ENCODE measurements at regions of chr7 and their contacts with region 1.

Region 1: GRCh38 chr7:39894904-39895303 is 55.2 kb upstream of the CDK13 start:
- DNase-seq: no peak
- H3K4me3 ChIP-seq: no peak overlapping the region
- H3K4me3 Mint-ChIP-seq: no peak overlapping the region
- H3K27ac Mint-ChIP-seq: no peak overlapping the region
- H3K4me1 ChIP-seq: peaks cover 16% of the 10 kb centered on the region
- H3K4me1 Mint-ChIP-seq: peaks cover 16% of the 10 kb centered on the region
- H3K27me3 ChIP-seq: no peaks in the 10 kb centered on the region
- H3K27me3 Mint-ChIP-seq: peaks cover 3% of the 10 kb centered on the region
- CTCF ChIP-seq: no peak

Region 2: GRCh38 chr7:39407137-39407536 is 487.8 kb before region 1 on chr7:
- CTCF ChIA-PET with region 1: no interaction called
- POLR2A ChIA-PET with region 1: no interaction called
- intact Hi-C with region 1: no loop called
- DNase-seq: no peak
- H3K4me3 ChIP-seq: no peak overlapping the region
- H3K4me3 Mint-ChIP-seq: no peak overlapping the region
- H3K27ac Mint-ChIP-seq: no peak overlapping the region
- H3K4me1 ChIP-seq: no peaks in the 10 kb centered on the region
- H3K4me1 Mint-ChIP-seq: peaks cover 10% of the 10 kb centered on the region
- H3K27me3 ChIP-seq: no peaks in the 10 kb centered on the region
- H3K27me3 Mint-ChIP-seq: peaks cover 3% of the 10 kb centered on the region
- CTCF ChIP-seq: no peak

Region 3: DNA sequence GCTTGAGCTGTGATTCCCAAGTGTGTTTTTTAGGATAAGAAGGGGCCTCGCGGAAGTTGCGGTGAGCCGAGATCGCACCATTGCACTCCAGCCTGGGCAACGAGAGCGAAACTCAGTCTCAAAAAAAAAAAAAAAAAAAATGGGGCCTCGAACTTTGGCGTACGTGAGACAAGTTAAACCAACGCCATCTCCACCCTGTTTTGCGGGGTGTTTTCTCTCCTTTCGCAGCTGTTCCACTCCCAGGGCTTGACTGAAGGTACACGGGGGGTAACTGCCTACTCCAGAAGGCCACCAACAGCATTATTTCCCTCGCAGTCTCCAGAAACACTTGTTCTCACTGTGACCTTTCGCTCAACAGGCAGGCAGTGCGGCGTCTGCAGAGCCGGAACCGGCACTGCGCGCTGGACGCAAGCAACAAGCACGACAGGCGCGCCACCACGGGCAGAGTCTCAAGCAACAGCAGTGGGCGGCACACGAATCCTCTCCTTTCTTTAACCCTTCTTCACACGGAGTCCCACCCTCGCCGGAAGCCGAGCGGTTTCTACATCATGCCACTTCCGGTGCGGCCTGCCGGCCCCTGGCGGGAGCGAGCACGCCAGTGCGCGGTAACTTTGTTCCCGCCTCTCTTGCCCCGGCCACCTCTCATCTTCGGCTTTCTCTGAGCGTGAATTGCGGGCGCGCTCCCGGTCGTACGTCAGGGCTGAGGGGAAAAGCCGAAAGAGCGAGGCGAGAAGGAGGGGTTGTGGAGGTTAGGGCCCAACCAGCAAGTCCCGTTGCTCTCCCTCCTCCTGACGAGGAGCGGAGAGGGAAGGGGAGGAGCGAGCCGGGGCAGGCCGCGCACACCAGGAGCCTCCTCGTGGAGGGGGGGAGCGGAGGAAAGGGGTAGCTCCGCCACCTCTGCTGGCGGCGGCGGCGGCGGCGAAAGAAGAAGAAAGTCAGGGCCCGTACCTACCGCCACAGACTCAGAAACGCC is 54.3 kb after region 1 on chr7:
- CTCF ChIA-PET with region 1: interaction called, 6 read pairs
- POLR2A ChIA-PET with region 1: interaction called, 4 read pairs
- intact Hi-C with region 1: loop called (anchors 1 kb)
- DNase-seq: peak; percentile 98 to 99
- H3K4me3 ChIP-seq: peak overlapping the region; percentile 93
- H3K4me3 Mint-ChIP-seq: peak overlapping the region; percentile 96
- H3K27ac Mint-ChIP-seq: peak overlapping the region; percentile 99
- H3K4me1 ChIP-seq: peaks cover 9% of the 10 kb centered on the region; the same call in 1 of the 2 replicates
- H3K4me1 Mint-ChIP-seq: no peaks in the 10 kb centered on the region
- H3K27me3 ChIP-seq: no peaks in the 10 kb centered on the region
- H3K27me3 Mint-ChIP-seq: no peaks in the 10 kb centered on the region
- CTCF ChIP-seq: no peak

Region 4: GRCh38 chr7:40057292-40057691 is 162.4 kb after region 1 on chr7:
- CTCF ChIA-PET with region 1: interaction called, 38 read pairs
- POLR2A ChIA-PET with region 1: no interaction called
- intact Hi-C with region 1: loop called (anchors 1 kb)
- DNase-seq: no peak
- H3K4me3 ChIP-seq: no peak overlapping the region
- H3K4me3 Mint-ChIP-seq: no peak overlapping the region
- H3K27ac Mint-ChIP-seq: no peak overlapping the region
- H3K4me1 ChIP-seq: peaks cover 9% of the 10 kb centered on the region
- H3K4me1 Mint-ChIP-seq: peaks cover 11% of the 10 kb centered on the region
- H3K27me3 ChIP-seq: no peaks in the 10 kb centered on the region
- H3K27me3 Mint-ChIP-seq: no peaks in the 10 kb centered on the region
- CTCF ChIP-seq: no peak

Region 5: GRCh38 chr7:40134428-40135316 is 239.8 kb after region 1 on chr7 and contains the starts of genes MPLKIP and SUGCT:
- CTCF ChIA-PET with region 1: interaction called, 4 read pairs
- POLR2A ChIA-PET with region 1: no interaction called
- intact Hi-C with region 1: loop called (anchors 1 kb)
- DNase-seq: peak; percentile 85 to 88
- H3K4me3 ChIP-seq: peak within 1 kb of the TSS; percentile 89
- H3K4me3 Mint-ChIP-seq: peak within 1 kb of the TSS; percentile 92
- H3K27ac Mint-ChIP-seq: peak within 1 kb of the TSS; percentile 92
- H3K4me1 ChIP-seq: peaks cover 9% of the 10 kb centered on the region
- H3K4me1 Mint-ChIP-seq: no peaks in the 10 kb centered on the region
- H3K27me3 ChIP-seq: no peaks in the 10 kb centered on the region
- H3K27me3 Mint-ChIP-seq: no peaks in the 10 kb centered on the region
- CTCF ChIP-seq: peak; percentile 62 to 97
- total RNA-seq, gene MPLKIP: 34.0 and 39.7 TPM in 2 replicates
- total RNA-seq, gene SUGCT: 9.9 and 12.2 TPM in 2 replicates

Measured in Caco-2 (cell line).